PC-9 (cell line): ENCODE measurements at regions of chr3 and their contacts with region 1.

Region 1: DNA sequence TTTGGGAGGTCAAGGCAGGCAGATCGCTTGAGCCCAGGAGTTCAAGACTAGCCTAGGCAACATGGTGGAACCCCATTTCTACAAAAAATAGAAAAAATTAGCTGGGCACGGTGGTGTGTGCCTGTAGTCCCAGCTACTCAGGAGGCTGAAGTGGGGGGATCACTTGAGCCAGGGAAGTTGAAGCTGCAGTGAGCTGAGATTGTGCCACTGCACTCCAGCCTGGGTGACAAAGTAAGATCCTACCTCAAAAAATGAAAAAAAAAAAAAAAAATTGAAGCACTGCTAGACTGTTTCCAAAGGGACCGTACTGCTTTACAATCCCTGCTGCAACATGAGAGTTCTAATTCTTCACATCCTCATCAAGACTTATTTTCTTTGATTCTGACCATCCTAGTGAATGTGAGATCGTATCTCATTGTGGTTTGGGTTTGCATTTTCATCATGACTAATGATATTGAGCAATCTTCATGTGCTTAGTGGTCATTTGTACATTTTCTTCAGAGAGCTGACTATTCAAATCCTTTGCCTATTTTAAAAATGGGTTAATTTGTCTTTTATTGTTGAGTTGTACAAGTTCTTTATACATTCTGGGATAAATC is 10.8 kb downstream of the CMTM8 start:
- DNase-seq: peak; percentile 17 to 88
- H3K4me3 ChIP-seq: no peak overlapping the region
- H3K27ac ChIP-seq: peak overlapping the region; percentile 84
- H3K4me1 ChIP-seq: peaks cover 30% of the 10 kb centered on the region
- H3K27me3 ChIP-seq: no peaks in the 10 kb centered on the region
- CTCF ChIP-seq: no peak

Region 2: GRCh38 chr3:32276279-32276847 is 27.1 kb after region 1 on chr3:
- CTCF ChIA-PET with region 1: interaction called, 4 read pairs
- POLR2A ChIA-PET with region 1: no interaction called
- intact Hi-C with region 1: loop called (anchors 1 kb)
- DNase-seq: peak; percentile 61 to 86
- H3K4me3 ChIP-seq: peak overlapping the region; percentile 21; the same call in 1 of the 2 replicates
- H3K27ac ChIP-seq: peak overlapping the region; percentile 89
- H3K4me1 ChIP-seq: peaks cover 56% of the 10 kb centered on the region
- H3K27me3 ChIP-seq: no peaks in the 10 kb centered on the region
- CTCF ChIP-seq: no peak

Region 3: DNA sequence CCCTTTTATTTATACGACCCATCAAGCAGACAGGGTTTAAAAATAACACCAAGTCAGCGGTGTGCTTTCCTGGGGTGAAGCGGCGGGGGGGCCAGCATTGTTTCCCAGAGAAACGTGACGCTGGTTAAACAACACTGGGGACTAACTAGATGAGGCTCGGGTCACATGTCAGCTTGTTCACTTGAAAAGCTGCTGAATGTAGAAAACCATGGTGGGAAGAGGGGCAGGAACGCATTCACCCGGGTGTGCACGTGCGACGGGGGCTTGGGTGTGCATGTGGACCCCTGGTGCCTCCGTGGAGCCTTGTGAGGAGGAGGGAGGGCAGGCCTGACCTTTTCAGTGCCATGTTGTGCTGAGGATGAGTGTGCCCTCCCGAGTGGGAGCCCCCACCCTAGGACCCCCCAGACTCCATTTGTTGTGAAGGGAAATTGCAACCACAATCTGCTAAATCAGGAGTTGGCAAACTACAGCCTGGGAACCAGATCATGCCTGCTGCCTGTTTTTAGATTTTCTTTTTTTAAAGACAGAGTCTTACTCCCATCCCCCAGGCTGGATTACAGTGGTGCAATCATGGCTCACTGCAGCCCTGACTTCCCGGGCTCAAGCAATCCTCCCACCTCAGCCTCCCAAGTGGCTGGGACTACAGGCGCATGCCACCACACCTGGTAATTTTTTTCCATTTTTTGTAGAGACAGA is 72.0 kb after region 1 on chr3:
- CTCF ChIA-PET with region 1: interaction called, 14 read pairs
- POLR2A ChIA-PET with region 1: no interaction called
- intact Hi-C with region 1: no loop called
- DNase-seq: no peak
- H3K4me3 ChIP-seq: no peak overlapping the region
- H3K27ac ChIP-seq: no peak overlapping the region
- H3K4me1 ChIP-seq: no peaks in the 10 kb centered on the region
- H3K27me3 ChIP-seq: no peaks in the 10 kb centered on the region
- CTCF ChIP-seq: no peak